SK-N-SH (cell line): ENCODE measurements at regions of chr17 and their contacts with region 1.

Region 1: DNA sequence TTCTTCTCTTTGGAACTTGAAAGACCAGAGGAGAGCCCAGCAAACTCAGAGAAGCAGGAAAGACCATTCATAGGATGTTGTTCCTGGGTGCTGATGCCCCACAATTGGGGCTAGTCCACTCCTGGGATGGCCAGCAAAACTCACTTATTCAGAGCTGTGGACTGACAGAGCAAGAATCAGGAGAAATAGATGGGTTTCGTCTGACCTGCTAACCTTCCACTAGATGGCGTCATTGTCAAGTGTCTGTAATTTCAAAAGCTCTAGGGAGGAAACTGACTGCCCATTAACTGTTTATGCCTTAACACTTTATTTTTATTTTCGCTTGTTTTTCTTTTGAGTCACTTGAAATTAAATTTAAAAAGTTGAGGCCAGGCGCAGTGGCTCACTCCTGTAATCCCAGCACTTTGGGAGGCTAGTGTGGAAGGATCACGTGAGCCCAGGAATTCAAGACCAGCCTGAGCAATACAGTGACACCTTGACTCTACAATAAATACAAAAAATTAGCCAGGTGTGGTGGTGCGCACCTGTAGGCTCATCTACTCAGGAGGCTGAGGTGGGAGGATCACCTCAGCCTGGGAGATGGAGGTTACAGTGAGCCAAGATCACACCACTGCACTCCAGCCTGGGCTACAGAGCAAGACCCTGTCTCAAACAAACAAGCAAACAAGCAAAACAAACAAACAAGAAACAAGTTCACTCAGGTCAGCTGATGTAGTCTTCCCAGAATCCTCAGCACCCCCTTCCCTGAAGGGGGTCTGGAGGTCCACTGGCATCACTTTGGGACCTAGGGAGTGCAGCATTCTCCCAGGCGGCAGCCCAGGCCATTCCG is 28.6 kb upstream of the MILR1 start:
- DNase-seq: peak; percentile 76
- H3K4me3 ChIP-seq: no peak overlapping the region; a peak in 1 of 4 replicates
- H3K27ac ChIP-seq: no peak overlapping the region
- H3K4me1 ChIP-seq: peaks cover 0 to 8% of the 10 kb centered on the region in 2 experiments; a peak in 1 of 4 replicates
- H3K27me3 ChIP-seq: no peaks in the 10 kb centered on the region
- CTCF ChIP-seq: peak; percentile 97
- EP300 ChIP-seq: no peak
- RAD21 ChIP-seq: peak; percentile 91

Region 2: GRCh38 chr17:64320613-64321553 is 99.5 kb before region 1 on chr17:
- CTCF ChIA-PET with region 1: interaction called, 501 read pairs
- POLR2A ChIA-PET with region 1: no interaction called
- DNase-seq: peak; percentile 88
- H3K4me3 ChIP-seq: no peak overlapping the region
- H3K27ac ChIP-seq: no peak overlapping the region
- H3K4me1 ChIP-seq: no peaks in the 10 kb centered on the region
- H3K27me3 ChIP-seq: no peaks in the 10 kb centered on the region
- CTCF ChIP-seq: peak; percentile 97
- EP300 ChIP-seq: no peak
- RAD21 ChIP-seq: peak; percentile 87

Region 3: DNA sequence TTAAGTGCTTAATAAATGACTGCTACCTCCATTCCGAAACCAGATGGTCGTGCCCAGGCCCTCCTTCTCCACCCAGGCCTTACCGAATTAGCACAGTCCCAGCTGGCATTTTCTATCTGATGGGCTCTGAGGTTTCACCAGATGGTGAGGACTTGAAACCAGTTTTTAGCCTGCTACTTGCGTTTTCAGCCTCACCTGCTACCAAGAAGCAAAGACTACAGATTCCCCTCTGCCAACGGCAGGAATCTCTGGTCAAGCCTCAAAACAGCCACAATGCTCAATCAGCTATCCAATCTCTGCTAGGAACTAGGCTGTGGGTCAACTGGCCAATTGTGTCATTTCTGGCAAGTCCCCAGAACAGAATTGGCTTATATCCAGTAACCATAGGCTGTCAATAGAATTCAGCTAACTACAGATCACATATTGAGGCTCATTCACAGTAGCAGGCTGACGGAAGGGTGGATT is 41.4 kb before region 1 on chr17:
- CTCF ChIA-PET with region 1: interaction called, 27 read pairs
- POLR2A ChIA-PET with region 1: no interaction called
- DNase-seq: no peak
- H3K4me3 ChIP-seq: no peak overlapping the region
- H3K27ac ChIP-seq: no peak overlapping the region
- H3K4me1 ChIP-seq: peaks cover 0 to 7% of the 10 kb centered on the region in 2 experiments; a peak in 3 of 4 replicates
- H3K27me3 ChIP-seq: no peaks in the 10 kb centered on the region
- CTCF ChIP-seq: no peak
- EP300 ChIP-seq: no peak
- RAD21 ChIP-seq: no peak

Region 4: GRCh38 chr17:64431534-64431933 is 11.2 kb after region 1 on chr17:
- CTCF ChIA-PET with region 1: interaction called, 70 read pairs
- POLR2A ChIA-PET with region 1: no interaction called
- DNase-seq: no peak
- H3K4me3 ChIP-seq: no peak overlapping the region
- H3K27ac ChIP-seq: no peak overlapping the region
- H3K4me1 ChIP-seq: no peaks in the 10 kb centered on the region
- H3K27me3 ChIP-seq: no peaks in the 10 kb centered on the region
- CTCF ChIP-seq: no peak
- EP300 ChIP-seq: no peak
- RAD21 ChIP-seq: no peak

Region 5: DNA sequence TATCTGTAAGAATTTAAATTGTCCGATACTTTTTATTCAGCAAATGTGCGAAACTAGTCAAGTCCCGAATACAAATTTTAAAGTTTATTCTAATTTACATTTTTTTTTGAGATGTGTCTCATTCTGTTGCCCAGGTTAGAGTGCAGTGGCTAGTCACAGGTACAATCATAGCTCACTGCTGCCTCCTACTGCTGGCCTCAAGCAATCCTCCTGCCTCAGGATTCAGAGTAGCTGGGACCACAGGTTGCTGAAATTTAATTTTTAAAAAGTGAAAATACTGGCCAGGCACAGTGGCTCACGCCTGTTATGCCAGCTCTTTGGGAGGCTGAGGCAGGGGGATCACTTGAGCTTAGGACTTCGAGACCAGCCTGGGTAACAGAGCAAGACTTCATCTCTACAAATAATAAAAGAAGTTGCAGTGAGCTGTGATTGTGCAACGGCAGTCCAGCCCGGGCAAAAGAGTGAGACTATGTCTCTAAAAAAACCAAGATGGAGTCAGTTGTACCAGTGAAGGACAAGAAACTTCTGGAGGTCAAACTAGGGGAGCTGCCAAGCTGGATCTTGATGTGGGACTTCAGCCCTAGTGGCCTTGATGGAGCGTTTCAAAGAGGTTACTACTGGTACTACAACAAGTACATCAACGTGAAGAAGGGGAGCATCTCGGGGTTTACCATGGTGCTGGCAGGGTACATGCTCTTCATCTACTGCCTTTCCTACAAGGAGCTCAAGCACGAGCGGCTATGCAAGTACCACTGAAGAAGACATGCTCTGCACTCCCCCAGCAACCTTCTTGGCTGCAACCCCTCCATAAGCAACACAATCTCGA is 70.9 kb after region 1 on chr17:
- CTCF ChIA-PET with region 1: interaction called, 122 read pairs
- POLR2A ChIA-PET with region 1: interaction called, 11 read pairs
- DNase-seq: no peak
- H3K4me3 ChIP-seq: no peak overlapping the region
- H3K27ac ChIP-seq: no peak overlapping the region; a peak in 1 of 4 replicates
- H3K4me1 ChIP-seq: peaks cover 4 to 9% of the 10 kb centered on the region in 2 experiments; a peak in 3 of 4 replicates
- H3K27me3 ChIP-seq: no peaks in the 10 kb centered on the region
- CTCF ChIP-seq: peak; percentile 92
- EP300 ChIP-seq: no peak
- RAD21 ChIP-seq: peak; percentile 61

Region 6: DNA sequence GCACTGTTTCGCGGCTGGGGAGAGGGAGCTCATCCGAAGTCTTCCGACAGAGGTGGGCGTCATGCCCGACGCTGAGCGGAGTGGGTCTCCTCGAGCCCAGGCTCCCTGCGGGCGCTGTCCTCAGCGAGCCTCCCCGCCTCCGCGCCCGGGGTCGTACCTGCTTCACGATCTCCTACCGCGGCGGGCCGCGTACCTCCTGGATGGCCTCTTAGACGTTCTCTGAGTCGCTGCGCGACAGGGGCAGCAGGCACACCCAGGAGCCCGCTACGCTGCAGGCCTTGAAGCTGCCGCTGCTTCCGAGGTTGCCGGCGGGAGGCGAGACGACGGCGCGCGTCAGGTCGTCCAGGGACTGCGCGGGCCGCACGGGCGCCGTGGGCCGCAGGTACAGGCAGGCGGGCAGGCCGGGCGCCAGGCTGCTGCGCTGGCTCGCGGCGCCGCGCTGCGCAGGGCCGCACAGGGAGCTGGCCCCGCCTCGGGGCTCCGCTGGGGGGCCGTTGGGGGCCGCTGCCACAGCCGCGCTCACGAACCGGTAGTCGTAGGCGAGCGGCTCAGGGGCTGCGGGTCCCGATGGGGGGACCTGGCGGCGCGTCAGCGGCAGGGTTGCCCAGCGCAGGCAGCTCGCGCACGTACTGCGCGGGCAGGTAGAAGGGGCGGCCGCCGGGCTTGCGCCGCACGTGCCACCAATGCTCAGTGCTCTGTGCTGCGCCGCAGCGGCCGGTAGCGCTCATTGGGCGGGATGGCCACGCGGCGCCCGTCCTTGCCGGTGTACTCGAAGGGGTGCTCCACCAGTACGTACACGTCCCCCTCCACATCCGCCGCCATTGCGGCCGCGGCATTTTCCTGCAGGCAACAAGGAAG is 358.1 kb after region 1 on chr17:
- CTCF ChIA-PET with region 1: interaction called, 19 read pairs
- POLR2A ChIA-PET with region 1: no interaction called
- DNase-seq: peak; percentile 41
- H3K4me3 ChIP-seq: no peak overlapping the region
- H3K27ac ChIP-seq: no peak overlapping the region
- H3K4me1 ChIP-seq: peaks cover 6 to 17% of the 10 kb centered on the region in 2 experiments; a peak in 3 of 4 replicates
- H3K27me3 ChIP-seq: no peaks in the 10 kb centered on the region
- CTCF ChIP-seq: no peak
- EP300 ChIP-seq: no peak
- RAD21 ChIP-seq: no peak